ENCODE measurements at regions of chr5 and their contacts with region 1.

Region 1: DNA sequence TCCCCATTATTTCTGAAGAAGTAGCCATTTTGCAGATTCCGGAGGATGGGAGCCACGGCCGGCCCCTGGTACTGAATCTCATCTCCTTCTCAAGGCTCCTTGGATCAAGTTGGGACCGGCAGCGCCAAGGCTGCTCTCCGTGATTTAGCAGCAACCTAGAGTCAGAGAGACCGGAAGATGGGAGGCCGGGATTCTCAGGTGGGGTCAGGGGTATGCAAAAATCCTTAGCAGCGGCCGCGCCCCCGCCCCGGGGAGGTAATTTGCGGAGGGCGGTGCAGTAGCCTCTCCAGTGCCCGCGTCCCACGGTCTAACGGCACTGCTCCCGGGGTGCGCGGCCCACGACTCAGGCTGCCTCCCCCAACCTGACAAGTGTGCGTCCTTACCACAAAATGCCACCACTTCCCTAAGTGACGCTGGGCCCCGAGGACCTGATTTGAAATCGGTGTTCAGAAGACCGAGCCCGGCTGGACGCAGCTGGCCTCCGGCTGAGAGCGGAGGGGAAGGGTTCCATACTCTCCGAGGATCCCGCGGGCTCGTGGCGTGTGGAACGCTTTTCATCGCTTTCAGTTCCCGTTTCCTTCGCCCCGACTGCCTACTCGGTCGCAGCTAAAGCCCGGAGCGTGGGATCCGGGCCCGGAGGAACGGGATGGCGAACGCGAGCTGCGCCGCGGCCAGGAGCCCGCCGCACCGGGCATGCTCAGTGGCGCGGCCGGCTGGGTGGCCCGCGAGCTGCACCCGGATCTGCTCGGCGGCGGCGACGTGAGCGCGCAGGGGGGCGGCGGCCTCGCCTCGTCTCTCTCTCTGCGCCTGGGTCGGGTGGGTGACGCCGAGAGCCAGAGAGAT is at the start of gene SCAMP1:
- DNase-seq: peak; percentile 97
- ATAC-seq: peak; percentile 91
- H3K4me3 Mint-ChIP-seq: peak within 1 kb of the TSS; percentile 98
- H3K27ac Mint-ChIP-seq: peak within 1 kb of the TSS; percentile 98
- H3K4me1 Mint-ChIP-seq: peaks cover 30% of the 10 kb centered on the region
- H3K27me3 Mint-ChIP-seq: no peaks in the 10 kb centered on the region
- total RNA-seq, gene SCAMP1: 22.2 to 23.5 TPM

Region 2: GRCh38 chr5:78294248-78295034 is 65.6 kb before region 1 on chr5 and contains the start of gene AP3B1:
- POLR2A ChIA-PET with region 1: interaction called, 74 read pairs
- DNase-seq: peak; percentile 98
- ATAC-seq: peak; percentile 95
- H3K4me3 Mint-ChIP-seq: peak within 1 kb of the TSS; percentile 100
- H3K27ac Mint-ChIP-seq: peak within 1 kb of the TSS; percentile 99
- H3K4me1 Mint-ChIP-seq: peaks cover 24% of the 10 kb centered on the region
- H3K27me3 Mint-ChIP-seq: peaks cover 3% of the 10 kb centered on the region
- total RNA-seq, gene AP3B1: 39.0 to 41.4 TPM